ENCODE measurements at regions of chrX and their contacts with region 1.

Region 1: GRCh38 chrX:112841114-112841819 is 636 bp upstream of the AMOT start:
- DNase-seq: peak; percentile 64
- H3K4me3 Mint-ChIP-seq: peak overlapping the region; percentile 87
- H3K27ac Mint-ChIP-seq: no peak overlapping the region
- H3K4me1 Mint-ChIP-seq: peaks cover 21% of the 10 kb centered on the region
- H3K27me3 Mint-ChIP-seq: peaks cover 7% of the 10 kb centered on the region

Region 2: GRCh38 chrX:112678831-112679230 is 162.4 kb before region 1 on chrX:
- intact Hi-C with region 1: loop called (anchors 10 kb)
- DNase-seq: no peak
- H3K4me3 Mint-ChIP-seq: peak overlapping the region; percentile 66
- H3K27ac Mint-ChIP-seq: peak overlapping the region; percentile 55
- H3K4me1 Mint-ChIP-seq: peaks cover 29% of the 10 kb centered on the region
- H3K27me3 Mint-ChIP-seq: no peaks in the 10 kb centered on the region

Region 3: DNA sequence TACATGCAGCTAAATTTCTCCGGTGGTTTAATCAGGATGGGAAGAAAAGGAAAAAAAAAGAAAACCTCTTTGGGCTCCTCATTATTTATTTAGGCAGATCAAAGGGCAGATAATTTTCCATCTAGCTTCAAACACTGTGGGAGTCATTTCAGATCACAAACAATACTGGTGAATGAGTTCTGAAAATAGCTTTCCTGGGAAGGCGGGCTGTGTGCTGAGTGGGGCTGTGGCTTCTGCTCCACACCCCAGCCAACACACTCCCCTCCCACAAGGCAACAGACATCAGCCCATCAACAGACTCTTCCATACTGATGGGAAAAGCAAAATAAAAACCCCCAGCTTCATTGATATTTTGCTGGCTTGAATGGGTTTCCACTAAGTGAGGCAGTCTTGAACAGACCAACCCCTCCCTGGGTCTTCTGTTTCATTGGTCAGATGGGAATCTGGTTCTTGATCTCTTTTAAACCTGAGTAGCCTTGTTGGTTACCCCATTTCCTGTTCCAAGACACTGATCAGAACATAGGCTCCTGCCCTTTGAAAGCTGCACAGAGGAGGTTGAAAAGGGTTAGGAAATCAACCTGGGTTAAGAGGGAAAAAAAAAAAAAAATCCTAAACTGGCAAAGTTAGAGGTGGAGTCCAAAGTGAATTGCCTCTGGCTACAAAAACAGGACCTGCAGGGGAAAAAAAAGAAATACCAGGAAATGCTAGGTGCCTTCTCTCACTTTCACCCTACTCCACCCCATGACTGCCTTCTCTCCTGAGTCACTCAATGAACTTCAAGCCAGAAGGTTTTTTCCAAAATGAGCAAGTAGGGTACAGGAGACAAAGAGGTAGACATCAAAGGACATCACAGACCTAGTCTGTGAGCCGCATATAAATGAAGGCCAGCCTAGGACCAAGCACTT is 20.7 kb before region 1 on chrX:
- intact Hi-C with region 1: loop called (anchors 2 kb)
- DNase-seq: no peak
- H3K4me3 Mint-ChIP-seq: no peak overlapping the region
- H3K27ac Mint-ChIP-seq: peak overlapping the region; percentile 42
- H3K4me1 Mint-ChIP-seq: peaks cover 13% of the 10 kb centered on the region
- H3K27me3 Mint-ChIP-seq: no peaks in the 10 kb centered on the region

Region 4: DNA sequence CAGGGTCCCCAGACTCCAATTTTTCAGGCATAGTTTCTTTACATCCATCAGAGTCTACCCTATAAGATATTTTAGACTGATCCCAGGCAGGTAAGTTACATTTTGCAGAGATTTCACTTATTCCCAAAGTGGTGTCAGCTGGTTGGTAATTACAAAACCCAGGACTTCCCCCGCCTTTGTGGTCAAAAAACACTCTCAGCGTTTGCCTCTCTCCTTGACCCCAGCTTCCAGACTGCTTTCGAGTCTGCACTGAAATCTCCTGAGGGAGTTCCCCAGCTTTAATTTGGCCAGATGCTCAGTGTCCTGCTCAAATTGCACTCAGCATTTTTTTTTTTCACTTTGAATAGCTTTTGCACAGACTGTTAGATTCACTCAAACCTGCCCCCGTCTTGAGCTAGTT is 10.5 kb after region 1 on chrX:
- intact Hi-C with region 1: loop called (anchors 1 kb)
- DNase-seq: no peak
- H3K4me3 Mint-ChIP-seq: no peak overlapping the region
- H3K27ac Mint-ChIP-seq: no peak overlapping the region
- H3K4me1 Mint-ChIP-seq: peaks cover 30% of the 10 kb centered on the region
- H3K27me3 Mint-ChIP-seq: peaks cover 2% of the 10 kb centered on the region

Region 5: DNA sequence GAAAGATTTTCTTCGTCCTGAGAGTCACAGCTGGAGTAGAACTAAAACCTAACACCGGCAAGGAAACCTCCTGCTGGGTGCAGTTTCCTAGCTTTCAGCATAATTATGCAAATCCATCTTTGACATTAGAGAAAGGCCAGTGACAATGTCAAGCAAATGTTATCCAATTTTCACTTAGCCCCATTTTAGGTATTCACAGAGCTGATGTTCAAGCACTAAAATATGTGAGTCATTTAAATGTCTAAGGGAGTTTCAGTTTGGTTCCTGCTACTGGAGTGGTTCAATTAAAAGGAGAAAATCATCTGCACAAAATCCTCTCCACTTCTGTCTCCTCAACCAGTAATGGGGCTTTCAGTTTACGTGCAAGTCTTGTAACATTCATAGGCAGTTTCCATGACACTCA is 36.5 kb after region 1 on chrX:
- intact Hi-C with region 1: no loop called
- DNase-seq: no peak
- H3K4me3 Mint-ChIP-seq: no peak overlapping the region
- H3K27ac Mint-ChIP-seq: no peak overlapping the region
- H3K4me1 Mint-ChIP-seq: no peaks in the 10 kb centered on the region
- H3K27me3 Mint-ChIP-seq: no peaks in the 10 kb centered on the region

Region 6: GRCh38 chrX:112967326-112967725 is 126.1 kb after region 1 on chrX:
- intact Hi-C with region 1: no loop called
- DNase-seq: no peak
- H3K4me3 Mint-ChIP-seq: no peak overlapping the region
- H3K27ac Mint-ChIP-seq: no peak overlapping the region
- H3K4me1 Mint-ChIP-seq: no peaks in the 10 kb centered on the region
- H3K27me3 Mint-ChIP-seq: no peaks in the 10 kb centered on the region

Measured in activated T-helper 2 cell treated with anti-CD3 and anti-CD28 coated beads, Interferon-gamma antibody, Interleukin-2, Interleukin-4, amounts not matched to agents 10 μg/mL and 5 μg/mL and 100 μg/mL, durations not matched to agents 14 hours and 24 hours and 36 hours (primary cell).